ENCODE measurements at regions of chr19 and their contacts with region 1.

Region 1: GRCh38 chr19:48321622-48322591 is 3.4 kb upstream of the EMP3 start:
- DNase-seq: peak; percentile 99 to 100 (median 100)
- H3K4me3 ChIP-seq: peak overlapping the region; percentile 54
- H3K27ac ChIP-seq: peak overlapping the region; percentile 84 to 98
- H3K4me1 ChIP-seq: peaks cover 11% of the 10 kb centered on the region
- H3K27me3 ChIP-seq: no peaks in the 10 kb centered on the region
- CTCF ChIP-seq: peak in 1 of 3 donors; percentile 2
- EP300 ChIP-seq: no peak
- POLR2A ChIP-seq: peak; percentile 80

Region 2: GRCh38 chr19:48468775-48469288 is 146.9 kb after region 1 on chr19:
- intact Hi-C with region 1: loop called in 1 of 4 experiments (anchors 10 kb)
- DNase-seq: peak; percentile 99 to 100 (median 99)
- H3K4me3 ChIP-seq: peak overlapping the region; percentile 98
- H3K27ac ChIP-seq: peak overlapping the region; percentile 75 to 96
- H3K4me1 ChIP-seq: peaks cover 7% of the 10 kb centered on the region
- H3K27me3 ChIP-seq: no peaks in the 10 kb centered on the region
- CTCF ChIP-seq: no peak
- EP300 ChIP-seq: no peak
- POLR2A ChIP-seq: no peak

Region 3: GRCh38 chr19:48618916-48619691 is 297.2 kb after region 1 on chr19 and contains the starts of genes RPL18 and SPHK2:
- intact Hi-C with region 1: loop called in 1 of 4 experiments (anchors 10 kb)
- DNase-seq: peak; percentile 96 to 98 (median 98)
- H3K4me3 ChIP-seq: peak within 1 kb of the TSS; percentile 74
- H3K27ac ChIP-seq: peak within 1 kb of the TSS; percentile 54 to 91
- H3K4me1 ChIP-seq: peaks cover 7% of the 10 kb centered on the region
- H3K27me3 ChIP-seq: no peaks in the 10 kb centered on the region
- CTCF ChIP-seq: peak in 2 of 3 donors; percentile 33
- EP300 ChIP-seq: peak; percentile 70
- POLR2A ChIP-seq: peak; percentile 91
- total RNA-seq, gene RPL18: 2,699 to 8,435 (median 3,584) TPM
- total RNA-seq, gene SPHK2: 12.3 to 37.2 (median 27.0) TPM

Measured in ovary (tissue), 10 donors.